Endothelial cell of umbilical vein (primary cell): ENCODE measurements at regions of chr1 and their contacts with region 1.

Region 1: DNA sequence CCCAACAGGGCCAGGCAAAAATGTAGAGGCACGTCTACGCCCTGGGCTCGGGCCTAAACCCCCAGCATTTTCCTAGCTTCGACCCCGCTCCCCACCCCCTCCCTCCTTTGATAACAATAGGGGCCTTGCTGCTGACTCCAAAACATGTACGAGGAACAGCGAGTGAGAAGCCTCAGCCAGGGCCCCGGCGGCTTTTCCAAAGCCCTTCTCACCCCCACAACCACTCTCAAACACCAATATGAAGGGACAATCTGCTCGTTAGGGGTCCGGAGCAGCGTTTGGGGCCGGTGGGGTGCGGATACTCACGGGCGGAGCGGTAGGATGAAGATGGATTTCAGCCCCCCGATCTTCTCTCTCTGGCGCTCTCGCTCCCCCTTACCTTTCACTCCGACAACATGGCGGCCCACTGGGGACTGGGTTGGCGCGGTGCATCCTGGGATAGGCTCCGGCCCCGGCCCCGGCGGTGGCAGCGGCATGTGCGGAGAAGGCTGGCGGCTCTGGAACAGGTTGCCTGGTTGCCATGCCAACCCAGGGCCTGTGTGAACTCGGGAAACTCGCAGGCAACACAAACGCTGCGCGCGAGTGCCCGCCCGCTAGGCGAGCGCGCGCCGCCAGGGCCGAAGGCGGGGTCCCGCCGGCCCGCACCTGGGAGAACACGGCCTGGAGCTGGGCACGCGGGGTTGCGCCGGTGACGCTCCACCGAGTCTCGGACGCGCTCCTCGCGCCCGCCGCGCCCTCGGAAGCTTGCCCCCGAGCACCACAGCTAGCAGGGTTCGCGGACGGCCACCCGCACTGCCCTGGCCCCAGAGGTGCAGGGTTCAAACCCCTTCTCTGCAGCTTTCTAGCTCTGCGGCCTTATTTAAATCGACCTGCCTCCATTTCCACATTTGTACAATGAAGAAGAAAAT is at the start of gene PUM1:
- DNase-seq: peak; percentile 99
- H3K4me3 ChIP-seq: peak within 1 kb of the TSS; percentile 82 to 99 (median 97)
- H3K27ac ChIP-seq: peak within 1 kb of the TSS; percentile 98
- H3K4me1 ChIP-seq: peaks cover 11% of the 10 kb centered on the region
- H3K27me3 ChIP-seq: no peaks in the 10 kb centered on the region
- CTCF ChIP-seq: no peak
- POLR2A ChIP-seq: peak; percentile 87
- total RNA-seq, gene PUM1: 124 and 131 TPM in 2 replicates

Region 2: GRCh38 chr1:30868833-30869435 is 196.6 kb before region 1 on chr1:
- CTCF ChIA-PET with region 1: no interaction called
- POLR2A ChIA-PET with region 1: no interaction called
- dilution Hi-C with region 1: no loop called
- intact Hi-C with region 1: no loop called
- DNase-seq: no peak
- H3K4me3 ChIP-seq: no peak overlapping the region
- H3K27ac ChIP-seq: no peak overlapping the region
- H3K4me1 ChIP-seq: no peaks in the 10 kb centered on the region
- H3K27me3 ChIP-seq: peaks cover 2 to 3% of the 10 kb centered on the region in 2 experiments
- CTCF ChIP-seq: no peak
- POLR2A ChIP-seq: no peak

Region 3: GRCh38 chr1:30966690-30967369 is 98.7 kb before region 1 on chr1:
- CTCF ChIA-PET with region 1: no interaction called
- POLR2A ChIA-PET with region 1: interaction called, 4 read pairs
- dilution Hi-C with region 1: no loop called
- intact Hi-C with region 1: loop called (anchors 2 kb)
- DNase-seq: peak; percentile 88
- H3K4me3 ChIP-seq: no peak overlapping the region
- H3K27ac ChIP-seq: peak overlapping the region; percentile 43
- H3K4me1 ChIP-seq: peaks cover 16% of the 10 kb centered on the region
- H3K27me3 ChIP-seq: no peaks in the 10 kb centered on the region
- CTCF ChIP-seq: no peak
- POLR2A ChIP-seq: no peak

Region 4: DNA sequence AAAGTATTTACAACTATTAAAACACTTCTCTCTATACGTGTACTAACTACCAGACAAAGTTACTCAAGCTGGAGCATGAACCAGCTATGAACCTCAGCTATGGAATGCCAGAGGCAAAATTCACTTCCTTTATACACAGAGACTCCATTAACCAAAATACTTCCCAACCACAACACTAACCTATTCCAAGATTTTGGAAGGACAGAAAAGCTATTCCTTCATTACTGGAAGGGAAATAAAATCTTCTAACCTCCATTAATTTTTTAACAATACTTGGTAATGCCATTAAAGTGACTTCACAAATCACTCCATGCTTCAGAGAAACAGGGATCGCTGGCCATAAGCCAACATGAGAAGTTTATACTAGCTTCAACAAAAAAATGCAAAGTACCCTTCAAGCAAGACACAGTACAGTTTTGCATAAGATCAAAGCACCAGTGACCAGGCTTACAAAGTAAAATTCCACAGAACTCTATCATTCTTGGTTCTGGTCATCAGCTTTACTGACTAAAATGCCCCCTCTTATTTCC is 58.0 kb before region 1 on chr1:
- CTCF ChIA-PET with region 1: no interaction called
- POLR2A ChIA-PET with region 1: interaction called, 7 read pairs
- dilution Hi-C with region 1: no loop called
- intact Hi-C with region 1: loop called (anchors 2 kb)
- DNase-seq: peak; percentile 74
- H3K4me3 ChIP-seq: no peak overlapping the region
- H3K27ac ChIP-seq: peak overlapping the region; percentile 26
- H3K4me1 ChIP-seq: peaks cover 19% of the 10 kb centered on the region
- H3K27me3 ChIP-seq: no peaks in the 10 kb centered on the region
- CTCF ChIP-seq: no peak
- POLR2A ChIP-seq: no peak

Region 5: GRCh38 chr1:31054958-31055481 is 10.5 kb before region 1 on chr1:
- CTCF ChIA-PET with region 1: no interaction called
- POLR2A ChIA-PET with region 1: interaction called, 7 read pairs
- dilution Hi-C with region 1: no loop called
- intact Hi-C with region 1: loop called (anchors 1 kb)
- DNase-seq: no peak
- H3K4me3 ChIP-seq: no peak overlapping the region
- H3K27ac ChIP-seq: no peak overlapping the region
- H3K4me1 ChIP-seq: no peaks in the 10 kb centered on the region
- H3K27me3 ChIP-seq: no peaks in the 10 kb centered on the region
- CTCF ChIP-seq: no peak
- POLR2A ChIP-seq: no peak

Region 6: GRCh38 chr1:31111290-31111977 is 45.9 kb after region 1 on chr1:
- CTCF ChIA-PET with region 1: no interaction called
- POLR2A ChIA-PET with region 1: no interaction called
- dilution Hi-C with region 1: no loop called
- intact Hi-C with region 1: no loop called
- DNase-seq: no peak
- H3K4me3 ChIP-seq: no peak overlapping the region
- H3K27ac ChIP-seq: no peak overlapping the region
- H3K4me1 ChIP-seq: no peaks in the 10 kb centered on the region
- H3K27me3 ChIP-seq: no peaks in the 10 kb centered on the region
- CTCF ChIP-seq: no peak
- POLR2A ChIP-seq: no peak

Region 7: DNA sequence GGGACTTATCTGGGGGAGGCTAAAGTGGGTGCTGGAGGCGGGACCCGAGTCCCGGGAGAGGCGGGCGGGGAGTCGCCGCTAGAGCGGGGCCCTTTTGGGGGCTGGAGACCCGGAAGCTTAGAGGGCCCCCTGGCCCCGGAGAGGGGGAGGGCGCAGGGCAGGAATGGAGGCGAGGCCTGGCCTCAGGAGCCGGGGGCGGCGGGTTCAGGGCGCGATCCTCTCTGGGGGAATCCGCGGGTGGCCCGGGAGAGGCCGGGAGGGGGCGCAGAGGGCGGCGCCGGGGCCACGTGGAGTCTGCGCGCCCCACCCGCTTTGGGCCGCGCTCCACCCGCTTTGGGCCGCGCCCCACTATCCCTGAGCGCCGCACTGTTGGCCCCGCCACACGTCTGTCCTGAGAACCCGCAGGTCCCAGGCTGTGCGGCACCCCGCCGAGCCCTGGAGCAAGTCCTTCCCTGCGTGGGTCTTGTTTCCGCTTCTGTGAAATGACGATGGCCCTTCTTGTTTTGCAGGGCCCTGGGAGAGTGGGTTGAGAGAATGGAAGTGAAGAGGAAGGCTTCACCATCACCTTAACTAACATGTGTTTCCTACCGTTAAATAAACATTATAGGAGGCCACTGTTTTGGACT is 89.8 kb after region 1 on chr1:
- CTCF ChIA-PET with region 1: no interaction called
- POLR2A ChIA-PET with region 1: no interaction called
- dilution Hi-C with region 1: no loop called
- intact Hi-C with region 1: loop called (anchors 2 kb)
- DNase-seq: peak; percentile 41
- H3K4me3 ChIP-seq: peak overlapping the region; percentile 77 to 85 (median 83)
- H3K27ac ChIP-seq: peak overlapping the region; percentile 63
- H3K4me1 ChIP-seq: peaks cover 5% of the 10 kb centered on the region
- H3K27me3 ChIP-seq: no peaks in the 10 kb centered on the region
- CTCF ChIP-seq: peak; percentile 25 to 44
- POLR2A ChIP-seq: peak; percentile 55

Region 8: DNA sequence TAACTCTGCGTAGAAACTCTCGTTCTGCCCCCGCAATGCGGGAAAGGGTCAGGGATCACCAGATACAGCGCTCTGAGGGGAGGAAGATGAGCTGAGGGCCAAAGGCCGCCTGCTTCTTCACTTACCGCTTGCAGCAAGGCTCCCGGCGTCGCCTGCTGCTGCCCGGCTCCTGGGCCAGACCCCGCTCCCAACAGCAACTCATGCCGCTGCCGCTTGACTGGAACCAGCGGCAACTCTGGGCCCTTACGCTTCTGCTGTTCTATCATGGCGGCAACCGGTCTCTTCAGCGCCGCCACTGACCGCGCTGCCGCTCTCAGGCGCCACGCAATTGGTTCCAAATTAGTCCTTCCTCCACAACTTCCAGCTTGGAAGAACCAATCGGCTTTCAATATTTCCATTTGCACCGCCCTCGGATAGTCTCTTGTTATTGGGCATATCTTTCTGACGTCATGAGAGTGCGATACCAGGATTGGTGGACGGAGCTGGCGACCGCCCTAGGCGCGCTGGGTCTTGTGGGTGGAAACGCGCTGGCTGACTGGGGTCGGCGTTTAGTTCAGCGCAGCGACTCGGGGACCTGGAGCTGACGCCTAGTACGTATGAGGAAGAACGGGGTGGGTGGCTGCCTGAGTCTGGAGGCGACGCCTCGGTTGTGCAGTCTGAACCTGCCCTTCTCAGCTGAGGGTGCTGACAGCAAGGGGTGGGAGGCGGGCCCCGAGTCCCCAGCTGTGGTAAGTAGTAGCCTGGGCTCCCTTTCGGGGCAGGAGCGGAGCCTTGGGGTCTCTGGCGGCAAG is 231.1 kb after region 1 on chr1 and contains the starts of genes SNRNP40 and ZCCHC17:
- CTCF ChIA-PET with region 1: no interaction called
- POLR2A ChIA-PET with region 1: no interaction called
- dilution Hi-C with region 1: no loop called
- intact Hi-C with region 1: loop called (anchors 2 kb)
- DNase-seq: peak; percentile 100
- H3K4me3 ChIP-seq: peak within 1 kb of the TSS; percentile 98 to 100 (median 98)
- H3K27ac ChIP-seq: peak within 1 kb of the TSS; percentile 81
- H3K4me1 ChIP-seq: peaks cover 20% of the 10 kb centered on the region
- H3K27me3 ChIP-seq: no peaks in the 10 kb centered on the region
- CTCF ChIP-seq: peak in 1 of 2 donors; percentile 13
- POLR2A ChIP-seq: peak; percentile 96
- total RNA-seq, gene SNRNP40: 78.1 and 85.3 TPM in 2 replicates
- total RNA-seq, gene ZCCHC17: 40.4 and 41.4 TPM in 2 replicates